A673 (cell line): ENCODE measurements at regions of chr10 and their contacts with region 1.

Region 1: GRCh38 chr10:72665925-72666324 is 26.0 kb upstream of the MCU start:
- DNase-seq: peak; percentile 20
- H3K4me3 ChIP-seq: no peak overlapping the region
- H3K27ac ChIP-seq: no peak overlapping the region
- H3K4me1 ChIP-seq: no peaks in the 10 kb centered on the region
- H3K27me3 ChIP-seq: no peaks in the 10 kb centered on the region
- CTCF ChIP-seq: no peak

Region 2: DNA sequence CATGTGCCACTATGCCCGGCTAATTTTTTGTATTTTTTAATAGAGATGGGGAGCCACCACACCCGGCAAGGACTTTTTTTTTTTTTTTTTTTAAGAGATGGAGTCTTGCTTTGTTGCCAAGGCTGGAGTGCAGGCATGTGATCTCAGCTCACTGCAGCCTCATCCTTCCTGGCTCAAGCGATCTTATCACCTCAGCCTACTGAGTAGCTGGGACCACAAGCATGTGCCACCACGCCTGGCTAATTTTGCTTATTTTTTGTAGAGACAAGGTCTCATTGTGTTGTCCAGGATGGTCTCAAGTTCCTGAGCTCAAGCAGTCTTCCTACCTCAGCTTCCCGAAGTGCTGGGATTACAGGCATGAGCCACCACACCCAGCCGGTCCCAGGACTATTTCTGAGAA is 16.7 kb after region 1 on chr10:
- CTCF ChIA-PET with region 1: no interaction called
- POLR2A ChIA-PET with region 1: interaction called, 17 read pairs
- intact Hi-C with region 1: no loop called
- DNase-seq: no peak
- H3K4me3 ChIP-seq: no peak overlapping the region
- H3K27ac ChIP-seq: no peak overlapping the region
- H3K4me1 ChIP-seq: peaks cover 9% of the 10 kb centered on the region
- H3K27me3 ChIP-seq: no peaks in the 10 kb centered on the region
- CTCF ChIP-seq: no peak